MCF 10A (cell line): ENCODE measurements at regions of chr14 and their contacts with region 1.

Region 1: DNA sequence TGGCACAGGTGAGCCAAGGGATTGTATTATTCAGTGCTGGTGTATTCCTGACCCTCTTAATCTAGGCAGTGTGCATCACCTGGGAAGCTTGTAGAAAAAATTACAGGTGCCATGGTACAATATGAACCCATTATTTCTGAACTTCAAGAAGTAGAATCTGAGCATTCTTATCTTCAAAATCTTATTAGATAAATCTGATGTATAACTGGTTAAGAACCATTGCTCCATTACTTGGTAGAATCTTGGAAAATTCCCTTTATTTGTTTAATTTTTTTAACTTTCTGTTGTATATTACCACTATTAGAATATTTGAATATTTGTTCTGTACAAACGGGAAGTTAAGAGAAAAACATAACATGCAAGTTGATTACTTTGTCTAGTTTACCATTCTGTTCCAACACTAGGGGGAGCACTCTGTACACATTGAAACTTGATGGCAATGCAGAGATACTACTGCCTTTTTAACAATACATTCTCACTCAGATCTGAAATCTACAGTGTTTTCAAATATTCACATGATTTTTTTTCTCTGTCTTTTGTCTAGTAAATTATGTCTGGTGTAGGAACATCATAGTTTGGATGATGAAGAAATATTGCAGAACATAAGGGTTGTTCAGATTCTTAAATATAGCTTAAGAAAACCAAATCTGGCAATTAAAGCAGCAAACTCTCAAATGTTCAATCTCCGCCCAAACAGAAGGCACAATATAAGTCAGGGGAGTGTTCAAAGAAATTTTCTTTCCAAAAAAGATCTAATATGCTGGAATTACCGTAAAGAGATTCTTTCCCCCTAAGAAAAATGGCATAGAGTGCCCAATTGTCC is 196.6 kb downstream of the PCNX1 start:
- DNase-seq: peak; percentile 72
- H3K4me3 Mint-ChIP-seq: no peak overlapping the region
- H3K27ac Mint-ChIP-seq: no peak overlapping the region
- H3K4me1 Mint-ChIP-seq: peaks cover 4% of the 10 kb centered on the region
- H3K27me3 Mint-ChIP-seq: no peaks in the 10 kb centered on the region
- CTCF ChIP-seq: peak; percentile 66

Region 2: GRCh38 chr14:70642298-70642960 is 461.4 kb before region 1 on chr14:
- CTCF ChIA-PET with region 1: no interaction called
- POLR2A ChIA-PET with region 1: no interaction called
- intact Hi-C with region 1: no loop called
- DNase-seq: no peak
- H3K4me3 Mint-ChIP-seq: peak overlapping the region; percentile 62
- H3K27ac Mint-ChIP-seq: no peak overlapping the region
- H3K4me1 Mint-ChIP-seq: no peaks in the 10 kb centered on the region
- H3K27me3 Mint-ChIP-seq: peaks cover 16% of the 10 kb centered on the region
- CTCF ChIP-seq: no peak

Region 3: DNA sequence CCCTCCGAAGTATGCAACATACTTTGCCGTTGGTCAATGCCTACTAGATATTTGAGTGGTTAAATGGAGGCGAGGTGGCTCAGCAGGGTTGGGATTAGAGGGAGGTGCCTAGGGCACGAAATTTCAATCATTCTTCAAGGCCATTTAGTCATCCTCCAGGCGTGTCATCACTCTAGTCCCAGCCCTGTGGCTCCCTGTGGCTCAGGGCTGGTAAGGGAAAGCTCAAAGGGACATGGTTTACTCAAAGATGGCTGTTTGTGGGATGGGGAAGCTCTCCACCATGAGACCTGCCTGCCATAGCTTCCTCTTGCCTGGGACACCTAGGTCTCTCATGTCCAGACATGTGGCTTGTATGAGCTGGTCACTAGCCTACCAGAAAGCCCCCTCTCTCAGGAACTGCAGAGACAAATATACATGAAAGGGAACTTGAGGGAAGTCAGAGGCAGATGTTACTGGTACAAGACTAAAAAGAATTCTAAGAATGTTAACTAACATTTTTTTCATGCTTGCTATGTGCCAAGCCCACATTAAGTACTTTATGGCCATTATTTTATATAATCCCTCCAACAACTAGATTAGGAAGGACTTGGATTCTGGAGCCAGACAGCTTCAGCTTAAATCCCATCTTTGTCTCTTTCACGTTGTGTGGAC is 437.7 kb before region 1 on chr14:
- CTCF ChIA-PET with region 1: no interaction called
- POLR2A ChIA-PET with region 1: no interaction called
- intact Hi-C with region 1: no loop called
- DNase-seq: peak; percentile 29
- H3K4me3 Mint-ChIP-seq: no peak overlapping the region
- H3K27ac Mint-ChIP-seq: peak overlapping the region; percentile 2
- H3K4me1 Mint-ChIP-seq: peaks cover 17% of the 10 kb centered on the region
- H3K27me3 Mint-ChIP-seq: no peaks in the 10 kb centered on the region
- CTCF ChIP-seq: no peak

Region 4: DNA sequence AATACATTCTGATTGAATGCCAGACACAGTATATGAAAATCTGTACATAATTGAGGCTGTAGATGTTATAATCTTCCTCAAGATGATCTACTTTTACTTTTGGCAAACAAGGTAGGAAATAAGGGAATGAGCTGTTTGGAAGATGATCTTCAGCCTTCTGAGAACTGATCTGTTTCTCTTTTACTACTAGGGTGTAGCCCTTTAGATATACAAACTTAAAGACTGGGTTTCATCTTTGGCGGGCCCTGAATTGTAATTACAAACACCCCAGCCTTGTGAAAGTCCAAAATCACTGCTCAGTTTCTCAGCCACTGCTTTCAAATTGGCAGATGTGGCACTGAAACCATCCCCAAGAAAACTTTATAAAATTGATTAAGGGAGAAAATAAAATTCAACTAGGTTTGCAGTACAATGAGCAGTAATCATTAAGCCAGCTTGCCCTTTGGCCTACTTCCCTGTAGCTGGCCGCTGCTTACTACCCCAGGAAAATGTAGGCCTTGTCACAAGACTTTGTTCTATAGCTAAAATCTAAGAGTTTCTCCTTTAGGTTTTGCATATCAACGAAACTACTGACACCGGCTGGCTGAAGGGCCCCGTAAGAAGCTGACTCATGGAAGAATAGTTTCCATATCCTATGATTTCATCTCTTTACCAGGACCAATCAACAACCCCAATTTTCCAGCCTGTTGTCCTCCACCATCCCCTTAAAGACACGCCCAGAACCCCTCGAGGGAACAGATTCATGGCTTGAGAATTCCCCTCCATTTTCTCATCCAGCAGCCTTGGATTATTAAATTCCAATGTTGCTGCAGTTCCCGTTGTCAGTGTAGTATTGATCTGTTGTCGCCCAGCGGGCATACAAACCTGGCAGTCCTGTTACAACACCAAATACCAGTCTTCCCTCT is 14.2 kb after region 1 on chr14:
- CTCF ChIA-PET with region 1: interaction called, 48 read pairs
- POLR2A ChIA-PET with region 1: interaction called, 3 read pairs
- intact Hi-C with region 1: no loop called
- DNase-seq: peak; percentile 84
- H3K4me3 Mint-ChIP-seq: no peak overlapping the region
- H3K27ac Mint-ChIP-seq: peak overlapping the region; percentile 85
- H3K4me1 Mint-ChIP-seq: peaks cover 21% of the 10 kb centered on the region
- H3K27me3 Mint-ChIP-seq: no peaks in the 10 kb centered on the region
- CTCF ChIP-seq: no peak

Region 5: DNA sequence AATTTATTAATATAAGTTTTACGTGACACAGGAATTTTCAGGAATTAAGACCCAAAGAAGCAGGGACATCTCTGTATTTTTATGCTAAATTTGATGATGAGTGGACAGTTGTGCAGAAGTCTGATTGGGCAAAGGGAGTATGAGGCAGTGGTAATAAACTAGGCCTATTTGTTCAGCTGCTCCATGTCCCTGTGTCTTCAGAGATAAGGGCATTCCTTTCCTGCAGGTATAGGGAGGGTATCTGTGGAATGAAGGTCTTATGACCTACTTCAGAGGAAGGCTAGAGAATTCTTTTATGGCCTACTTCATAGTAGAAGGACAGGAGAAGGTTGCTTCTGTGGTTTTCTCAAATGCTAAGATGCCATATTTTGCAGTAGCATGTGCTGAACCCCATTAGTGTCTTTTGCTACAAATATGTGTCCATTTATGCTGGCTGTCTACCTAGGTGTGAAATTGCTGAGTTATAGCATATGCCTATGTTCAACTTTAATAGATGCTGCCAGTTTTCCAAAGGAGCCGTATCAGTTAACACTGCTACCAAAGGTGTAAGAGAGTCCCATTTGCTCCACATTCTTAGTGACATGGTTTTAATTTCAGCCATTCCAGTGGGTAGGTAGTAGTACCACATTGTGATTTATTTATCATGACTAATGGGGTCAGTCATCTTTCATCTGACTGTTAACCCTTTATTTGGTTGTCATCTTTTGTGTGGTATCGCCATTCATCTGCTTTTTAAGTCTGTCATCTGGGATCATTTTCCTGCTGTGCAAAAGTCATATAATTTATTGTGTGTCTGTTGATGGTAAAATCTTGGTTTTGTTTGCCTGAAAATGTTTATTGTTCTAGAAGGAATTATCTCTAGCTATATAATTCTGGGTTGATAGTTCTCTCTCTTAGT is 417.6 kb after region 1 on chr14:
- CTCF ChIA-PET with region 1: no interaction called
- POLR2A ChIA-PET with region 1: no interaction called
- intact Hi-C with region 1: no loop called
- DNase-seq: no peak
- H3K4me3 Mint-ChIP-seq: no peak overlapping the region
- H3K27ac Mint-ChIP-seq: no peak overlapping the region
- H3K4me1 Mint-ChIP-seq: peaks cover 12% of the 10 kb centered on the region
- H3K27me3 Mint-ChIP-seq: no peaks in the 10 kb centered on the region
- CTCF ChIP-seq: no peak